ENCODE measurements at regions of chr9 and their contacts with region 1.

Region 1: DNA sequence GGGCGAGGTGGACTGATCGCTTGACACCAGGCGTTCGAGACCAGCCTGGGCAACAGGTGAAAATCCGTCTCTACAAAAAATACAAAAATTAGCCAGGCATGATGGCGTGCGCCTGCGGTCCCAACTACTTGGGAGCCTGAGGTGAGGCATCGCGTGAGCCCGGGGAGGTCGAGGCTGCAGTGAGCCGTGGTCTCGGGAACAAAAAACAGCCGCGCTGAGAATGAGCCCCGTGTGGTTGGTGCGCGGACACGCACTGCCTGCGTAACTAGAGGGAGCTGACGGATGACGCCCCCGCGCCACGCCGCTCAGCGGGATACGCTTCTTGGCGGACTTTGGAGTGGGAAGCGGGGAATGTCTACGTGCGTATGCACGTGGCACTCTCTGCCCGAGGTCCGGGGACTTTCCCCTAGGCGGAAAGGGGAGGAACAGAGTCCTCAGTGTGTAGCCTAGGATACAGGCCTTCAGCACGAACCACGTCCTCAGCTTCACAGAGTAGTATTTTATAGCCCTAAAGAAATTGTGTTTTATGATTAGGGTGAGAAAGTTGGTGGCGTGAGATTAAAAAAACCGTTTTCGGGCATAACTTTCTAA is at the start of gene RMRP:
- DNase-seq: peak; percentile 95
- ATAC-seq: peak; percentile 93
- H3K4me3 ChIP-seq: peak within 1 kb of the TSS; percentile 64 to 70
- H3K27ac ChIP-seq: peak within 1 kb of the TSS; percentile 94
- H3K4me1 ChIP-seq: peaks cover 37% of the 10 kb centered on the region
- H3K27me3 ChIP-seq: no peaks in the 10 kb centered on the region
- CTCF ChIP-seq: no peak
- total RNA-seq, gene RMRP: 29,896 TPM

Region 2: GRCh38 chr9:35639631-35640030 is 18.0 kb before region 1 on chr9:
- CTCF ChIA-PET with region 1: no interaction called
- POLR2A ChIA-PET with region 1: no interaction called
- in situ Hi-C with region 1: no loop called
- intact Hi-C with region 1: no loop called
- DNase-seq: no peak
- ATAC-seq: no peak
- H3K4me3 ChIP-seq: no peak overlapping the region
- H3K27ac ChIP-seq: no peak overlapping the region
- H3K4me1 ChIP-seq: 0 out of 2 replicates have a peak, but pooled peaks cover 2% of the 10 kb centered on the region
- H3K27me3 ChIP-seq: no peaks in the 10 kb centered on the region
- CTCF ChIP-seq: no peak

Region 3: GRCh38 chr9:35696525-35697215 is 39.0 kb after region 1 on chr9:
- CTCF ChIA-PET with region 1: interaction called, 15 read pairs
- POLR2A ChIA-PET with region 1: interaction called, 6 read pairs
- in situ Hi-C with region 1: no loop called
- intact Hi-C with region 1: loop called (anchors 5 kb)
- DNase-seq: peak; percentile 57
- ATAC-seq: peak; percentile 88
- H3K4me3 ChIP-seq: no peak overlapping the region
- H3K27ac ChIP-seq: no peak overlapping the region
- H3K4me1 ChIP-seq: peaks cover 4% of the 10 kb centered on the region; the same call in 1 of the 2 replicates
- H3K27me3 ChIP-seq: no peaks in the 10 kb centered on the region
- CTCF ChIP-seq: no peak

Region 4: GRCh38 chr9:35705836-35706430 is 48.3 kb after region 1 on chr9:
- CTCF ChIA-PET with region 1: interaction called, 5 read pairs
- POLR2A ChIA-PET with region 1: no interaction called
- in situ Hi-C with region 1: no loop called
- intact Hi-C with region 1: loop called (anchors 5 kb)
- DNase-seq: no peak
- ATAC-seq: no peak
- H3K4me3 ChIP-seq: no peak overlapping the region
- H3K27ac ChIP-seq: no peak overlapping the region
- H3K4me1 ChIP-seq: no peaks in the 10 kb centered on the region
- H3K27me3 ChIP-seq: no peaks in the 10 kb centered on the region
- CTCF ChIP-seq: no peak

Region 5: DNA sequence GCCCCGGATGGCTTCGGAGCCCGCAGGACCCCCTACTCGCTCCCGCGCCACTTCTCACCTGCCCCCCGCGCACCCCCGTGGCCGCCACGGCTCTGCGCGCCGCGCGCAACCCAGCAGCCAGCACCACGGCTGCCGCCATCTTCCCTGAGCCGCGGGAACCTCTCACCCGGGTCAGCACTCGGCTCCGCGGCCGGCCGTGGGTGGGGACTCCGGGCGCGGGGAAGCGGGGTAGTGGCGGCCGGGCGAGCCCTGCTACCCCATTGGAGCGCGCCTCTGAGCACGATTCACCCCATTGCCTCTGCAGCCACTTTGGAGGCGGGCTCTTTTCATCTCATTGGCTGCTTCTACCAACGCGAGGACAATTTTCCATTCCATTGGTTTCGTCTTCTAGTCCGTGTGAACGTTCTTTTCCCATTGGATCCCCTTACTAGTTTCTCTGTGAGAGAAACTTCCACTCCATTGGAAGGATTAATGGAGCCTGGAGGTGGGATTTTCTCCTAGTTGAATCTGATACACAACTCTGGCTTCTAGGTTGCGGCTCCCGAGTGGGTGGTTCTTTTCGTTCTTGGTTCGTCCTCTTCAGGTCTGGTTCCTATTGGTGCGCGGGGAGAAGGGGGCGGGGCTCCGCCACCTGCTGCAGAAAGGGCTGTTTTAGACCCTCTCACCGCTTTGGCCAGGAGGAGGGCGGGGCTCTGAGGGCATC is 157.4 kb after region 1 on chr9 and contains the start of gene HINT2:
- CTCF ChIA-PET with region 1: no interaction called
- POLR2A ChIA-PET with region 1: no interaction called
- in situ Hi-C with region 1: no loop called
- intact Hi-C with region 1: loop called (anchors 10 kb)
- DNase-seq: peak; percentile 91
- ATAC-seq: peak; percentile 94
- H3K4me3 ChIP-seq: peak within 1 kb of the TSS; percentile 88 to 90
- H3K27ac ChIP-seq: peak within 1 kb of the TSS; percentile 85
- H3K4me1 ChIP-seq: peaks cover 29% of the 10 kb centered on the region
- H3K27me3 ChIP-seq: peaks cover 3% of the 10 kb centered on the region; the same call in 1 of the 2 replicates
- CTCF ChIP-seq: no peak
- total RNA-seq, gene HINT2: 75.6 TPM